Colonic mucosa (tissue), 4 donors: ENCODE measurements at regions of chrX and their contacts with region 1.

Region 1: DNA sequence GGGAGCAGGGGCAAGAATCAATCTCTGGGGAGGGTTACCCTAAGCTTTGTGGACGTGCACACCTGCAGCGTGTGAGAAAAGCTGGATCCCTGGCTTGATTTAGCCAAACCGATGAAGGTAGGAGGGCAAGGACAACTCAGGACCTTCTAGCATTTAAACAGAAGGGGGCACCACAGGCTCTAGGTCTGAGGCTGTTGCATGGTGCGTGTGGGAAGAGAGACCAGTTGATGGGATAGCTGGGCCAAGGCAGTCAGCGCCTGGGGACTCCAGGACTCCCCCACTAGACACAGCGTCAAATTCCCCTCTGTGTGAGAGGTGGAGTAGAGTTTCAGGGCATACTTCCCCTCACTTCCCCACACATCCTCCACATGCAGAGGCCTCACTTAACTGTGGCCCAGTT is 4.3 kb downstream of the GABRQ start:
- DNase-seq: no peak
- H3K4me3 ChIP-seq: no peak overlapping the region
- H3K27ac ChIP-seq: no peak overlapping the region
- H3K4me1 ChIP-seq: no peaks in the 10 kb centered on the region
- H3K27me3 ChIP-seq: no peaks in the 10 kb centered on the region
- CTCF ChIP-seq: no peak

Region 2: DNA sequence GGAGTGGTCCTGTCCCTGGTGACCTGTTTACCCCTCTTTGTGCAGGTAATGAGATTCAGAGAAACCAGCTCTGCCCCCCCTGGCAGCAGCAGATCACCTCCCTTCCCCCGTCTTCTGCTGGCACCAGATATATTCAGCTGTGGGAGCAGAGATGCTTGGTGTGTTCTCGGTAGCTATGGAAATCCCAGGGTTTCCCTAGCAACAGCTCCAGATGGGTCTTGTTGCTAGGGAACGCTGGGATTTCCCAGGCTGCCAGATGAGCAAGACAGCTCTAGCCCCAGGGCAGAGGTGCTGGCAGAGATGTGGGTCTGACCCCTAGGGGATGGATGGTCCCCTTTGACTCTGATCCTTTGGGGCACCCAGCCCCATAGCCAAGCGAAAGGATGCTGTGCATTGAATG is 168.4 kb after region 1 on chrX:
- intact Hi-C with region 1: no loop called
- DNase-seq: no peak
- H3K4me3 ChIP-seq: no peak overlapping the region
- H3K27ac ChIP-seq: no peak overlapping the region
- H3K4me1 ChIP-seq: no peaks in the 10 kb centered on the region
- H3K27me3 ChIP-seq: no peaks in the 10 kb centered on the region
- CTCF ChIP-seq: no peak

Region 3: GRCh38 chrX:152821145-152821765 is 179.3 kb after region 1 on chrX:
- intact Hi-C with region 1: loop called (anchors 10 kb)
- DNase-seq: peak; percentile 44
- H3K4me3 ChIP-seq: no peak overlapping the region
- H3K27ac ChIP-seq: no peak overlapping the region
- H3K4me1 ChIP-seq: no peaks in the 10 kb centered on the region
- H3K27me3 ChIP-seq: no peaks in the 10 kb centered on the region
- CTCF ChIP-seq: peak; percentile 45